ENCODE measurements at regions of chr4 and their contacts with region 1.

Region 1: DNA sequence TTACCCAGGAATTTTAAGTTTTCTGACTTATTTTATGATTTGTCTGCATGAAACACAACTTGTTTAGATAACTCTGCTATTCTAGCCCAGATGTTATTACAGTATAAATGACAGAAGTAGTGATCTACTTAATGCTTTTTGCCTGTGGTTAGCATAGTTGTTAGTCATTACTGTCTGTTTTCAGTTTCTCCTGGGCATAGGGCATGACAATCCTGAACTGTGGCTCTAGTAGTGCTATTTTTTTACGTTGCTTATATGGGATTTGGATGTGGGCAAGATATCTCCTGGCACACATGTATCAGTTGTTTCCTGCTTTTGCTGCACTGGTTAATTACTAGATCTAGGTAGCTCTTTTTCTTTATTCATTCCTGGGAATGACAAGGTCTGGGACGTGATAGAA is 1005.8 kb downstream of the PCDH18 start:
- H3K4me3 ChIP-seq: no peak overlapping the region
- H3K27ac ChIP-seq: no peak overlapping the region
- H3K4me1 ChIP-seq: no peaks in the 10 kb centered on the region
- CTCF ChIP-seq: no peak

Region 2: GRCh38 chr4:136476753-136477152 is 49.8 kb before region 1 on chr4:
- CTCF ChIA-PET with region 1: no interaction called
- POLR2A ChIA-PET with region 1: no interaction called
- H3K4me3 ChIP-seq: no peak overlapping the region
- H3K27ac ChIP-seq: no peak overlapping the region
- H3K4me1 ChIP-seq: no peaks in the 10 kb centered on the region
- CTCF ChIP-seq: no peak

Region 3: GRCh38 chr4:136516371-136516770 is 10.1 kb before region 1 on chr4:
- CTCF ChIA-PET with region 1: interaction called, 14 read pairs
- POLR2A ChIA-PET with region 1: no interaction called
- H3K4me3 ChIP-seq: no peak overlapping the region
- H3K27ac ChIP-seq: no peak overlapping the region
- H3K4me1 ChIP-seq: no peaks in the 10 kb centered on the region
- CTCF ChIP-seq: no peak

Region 4: DNA sequence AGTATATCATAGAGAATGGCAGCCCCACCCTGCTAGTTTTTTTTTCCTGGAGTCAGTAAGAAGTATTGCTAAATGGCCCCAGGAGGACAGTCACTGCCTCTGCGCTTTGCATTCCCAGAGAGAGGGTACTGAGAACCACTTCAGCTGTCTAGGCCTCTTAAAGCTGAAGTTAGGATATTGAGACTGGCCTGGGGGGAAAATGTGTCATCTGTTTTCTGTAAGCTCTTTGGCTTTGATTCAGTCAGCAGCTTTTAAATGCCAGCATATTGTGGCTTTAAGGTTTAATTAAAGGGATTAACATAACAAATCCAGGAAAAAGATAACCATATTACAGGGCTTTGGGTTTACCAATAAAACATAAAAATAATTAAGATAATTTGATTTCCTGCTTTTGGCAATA is 153.8 kb after region 1 on chr4:
- CTCF ChIA-PET with region 1: no interaction called
- POLR2A ChIA-PET with region 1: no interaction called
- H3K4me3 ChIP-seq: no peak overlapping the region
- H3K27ac ChIP-seq: no peak overlapping the region
- H3K4me1 ChIP-seq: no peaks in the 10 kb centered on the region
- CTCF ChIP-seq: no peak

Region 5: GRCh38 chr4:136793848-136794247 is 267.3 kb after region 1 on chr4:
- CTCF ChIA-PET with region 1: no interaction called
- POLR2A ChIA-PET with region 1: no interaction called
- H3K4me3 ChIP-seq: no peak overlapping the region
- H3K27ac ChIP-seq: no peak overlapping the region
- H3K4me1 ChIP-seq: no peaks in the 10 kb centered on the region
- CTCF ChIP-seq: no peak